CD8-positive, alpha-beta memory T cell (primary cell): ENCODE measurements at regions of chr16 and their contacts with region 1.

Region 1: GRCh38 chr16:57185944-57186871 is at the starts of genes PSME3IP1 and RSPRY1:
- DNase-seq: peak; percentile 95 to 100 (median 99)
- H3K4me3 ChIP-seq: peak within 1 kb of the TSS; percentile 85
- H3K4me3 Mint-ChIP-seq: peak within 1 kb of the TSS; percentile 92 to 98 (median 94)
- H3K27ac ChIP-seq: peak within 1 kb of the TSS; percentile 83
- H3K27ac Mint-ChIP-seq: peak within 1 kb of the TSS; percentile 91 to 98 (median 95)
- H3K4me1 ChIP-seq: peaks cover 21% of the 10 kb centered on the region
- H3K4me1 Mint-ChIP-seq: peaks cover 48 to 76% (median 59%) of the 10 kb centered on the region in 3 donors
- H3K27me3 ChIP-seq: no peaks in the 10 kb centered on the region
- H3K27me3 Mint-ChIP-seq: peaks cover 0 to 3% of the 10 kb centered on the region in 2 donors
- total RNA-seq, gene PSME3IP1: 103 to 111 TPM
- total RNA-seq, gene RSPRY1: 33.3 to 36.6 TPM

Region 2: DNA sequence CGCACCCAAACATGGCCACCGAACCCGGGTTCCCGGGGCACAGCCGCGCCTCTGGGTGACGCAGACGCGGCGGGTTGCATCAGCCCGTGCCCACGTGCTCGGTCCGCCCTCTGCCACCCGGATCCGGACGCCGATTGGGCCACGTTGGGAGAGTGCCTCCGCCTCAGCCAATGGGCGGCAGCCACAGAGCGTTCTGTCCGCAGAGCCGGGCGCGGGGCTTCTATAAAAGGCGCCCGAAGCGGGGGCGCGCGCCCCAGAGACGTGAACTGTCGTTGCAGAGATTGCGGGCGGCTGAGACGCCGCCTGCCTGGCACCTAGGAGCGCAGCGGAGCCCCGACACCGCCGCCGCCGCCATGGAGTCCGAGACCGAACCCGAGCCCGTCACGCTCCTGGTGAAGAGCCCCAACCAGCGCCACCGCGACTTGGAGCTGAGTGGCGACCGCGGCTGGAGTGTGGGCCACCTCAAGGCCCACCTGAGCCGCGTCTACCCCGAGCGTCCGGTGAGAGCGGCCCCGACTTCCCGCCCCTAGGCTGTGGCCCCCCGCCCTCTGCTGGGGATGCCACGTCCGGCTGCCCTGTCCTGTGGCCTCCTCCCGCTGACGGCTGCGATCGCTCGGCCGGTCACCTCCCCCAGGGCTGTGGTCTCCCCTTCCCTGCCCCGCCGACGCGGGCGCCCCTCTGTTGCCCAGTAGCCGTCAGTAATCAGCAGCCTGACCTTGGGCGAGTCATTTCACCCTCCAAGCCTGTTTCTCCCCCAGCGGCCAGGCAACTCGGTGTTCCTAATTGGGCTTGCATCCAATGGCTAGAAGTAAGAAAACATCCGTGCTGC is 254.1 kb before region 1 on chr16 and contains the start of gene HERPUD1:
- CTCF ChIA-PET with region 1: no interaction called
- POLR2A ChIA-PET with region 1: interaction called, 14 read pairs
- DNase-seq: peak; percentile 98 to 99 (median 99)
- H3K4me3 ChIP-seq: peak within 1 kb of the TSS; percentile 69
- H3K4me3 Mint-ChIP-seq: peak within 1 kb of the TSS; percentile 95 to 100 (median 98)
- H3K27ac ChIP-seq: peak within 1 kb of the TSS; percentile 95
- H3K27ac Mint-ChIP-seq: peak within 1 kb of the TSS; percentile 95 to 99 (median 98)
- H3K4me1 ChIP-seq: peaks cover 47% of the 10 kb centered on the region
- H3K4me1 Mint-ChIP-seq: peaks cover 34 to 48% (median 47%) of the 10 kb centered on the region in 3 donors
- H3K27me3 ChIP-seq: no peaks in the 10 kb centered on the region
- H3K27me3 Mint-ChIP-seq: peaks cover 0 to 5% of the 10 kb centered on the region in 2 donors
- total RNA-seq, gene HERPUD1: 162 to 176 TPM